ENCODE measurements at regions of chr6 and their contacts with region 1.

Region 1: DNA sequence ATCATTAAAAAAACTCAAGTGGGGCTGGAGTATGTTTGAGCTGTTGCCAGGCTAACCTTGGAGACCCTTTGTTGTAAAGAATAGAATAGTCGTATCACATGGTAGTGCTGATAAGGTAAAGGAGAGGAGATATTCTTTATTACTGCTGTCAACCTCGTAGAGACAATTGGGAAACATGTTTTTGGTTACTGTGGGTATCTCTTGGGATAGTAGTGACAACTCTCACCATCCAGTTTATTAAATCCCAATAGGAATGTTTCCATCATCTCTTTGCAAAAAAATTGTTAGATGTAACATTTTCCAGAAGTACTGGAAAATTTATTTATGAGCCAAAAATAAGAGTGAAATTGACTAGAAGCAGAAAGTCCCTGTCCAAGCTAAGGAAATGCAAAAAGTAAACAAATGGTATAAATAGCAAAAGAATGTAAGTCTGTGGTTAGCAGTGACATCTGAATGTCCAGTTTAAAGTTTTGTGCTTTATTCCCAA is 829.3 kb upstream of the CITED2 start:
- DNase-seq: peak; percentile 84
- H3K4me3 ChIP-seq: no peak overlapping the region
- H3K27ac ChIP-seq: peak overlapping the region; percentile 22
- H3K4me1 ChIP-seq: peaks cover 20% of the 10 kb centered on the region
- H3K27me3 ChIP-seq: no peaks in the 10 kb centered on the region
- CTCF ChIP-seq: no peak
- POLR2A ChIP-seq: no peak

Region 2: GRCh38 chr6:139539852-139540251 is 663.9 kb before region 1 on chr6:
- CTCF ChIA-PET with region 1: no interaction called
- POLR2A ChIA-PET with region 1: no interaction called
- dilution Hi-C with region 1: no loop called
- intact Hi-C with region 1: loop called (anchors 10 kb)
- DNase-seq: peak; percentile 13
- H3K4me3 ChIP-seq: no peak overlapping the region
- H3K27ac ChIP-seq: peak overlapping the region; percentile 24
- H3K4me1 ChIP-seq: peaks cover 29% of the 10 kb centered on the region
- H3K27me3 ChIP-seq: no peaks in the 10 kb centered on the region
- CTCF ChIP-seq: no peak
- POLR2A ChIP-seq: no peak

Region 3: DNA sequence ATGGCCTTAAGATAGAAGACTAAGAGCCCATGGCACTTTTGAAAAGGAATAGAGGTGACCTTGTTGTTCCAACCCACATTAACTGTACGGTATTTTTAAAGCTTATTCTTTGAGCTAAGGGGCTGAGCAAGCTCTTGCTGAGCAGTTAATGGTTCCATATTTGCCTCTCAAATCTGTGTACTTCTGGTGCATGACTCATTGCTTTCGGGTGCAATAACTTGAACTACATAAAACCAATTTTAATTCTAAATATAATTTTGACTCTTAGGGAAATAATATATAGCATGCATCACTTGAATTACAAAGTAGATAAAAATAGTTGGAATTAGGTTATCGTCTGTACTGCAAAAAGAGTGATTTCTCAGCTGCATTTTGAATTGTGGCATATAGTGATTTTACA is 481.2 kb before region 1 on chr6:
- CTCF ChIA-PET with region 1: no interaction called
- POLR2A ChIA-PET with region 1: no interaction called
- dilution Hi-C with region 1: no loop called
- intact Hi-C with region 1: no loop called
- DNase-seq: no peak
- H3K4me3 ChIP-seq: no peak overlapping the region
- H3K27ac ChIP-seq: no peak overlapping the region
- H3K4me1 ChIP-seq: no peaks in the 10 kb centered on the region
- H3K27me3 ChIP-seq: no peaks in the 10 kb centered on the region
- CTCF ChIP-seq: no peak
- POLR2A ChIP-seq: no peak

Region 4: DNA sequence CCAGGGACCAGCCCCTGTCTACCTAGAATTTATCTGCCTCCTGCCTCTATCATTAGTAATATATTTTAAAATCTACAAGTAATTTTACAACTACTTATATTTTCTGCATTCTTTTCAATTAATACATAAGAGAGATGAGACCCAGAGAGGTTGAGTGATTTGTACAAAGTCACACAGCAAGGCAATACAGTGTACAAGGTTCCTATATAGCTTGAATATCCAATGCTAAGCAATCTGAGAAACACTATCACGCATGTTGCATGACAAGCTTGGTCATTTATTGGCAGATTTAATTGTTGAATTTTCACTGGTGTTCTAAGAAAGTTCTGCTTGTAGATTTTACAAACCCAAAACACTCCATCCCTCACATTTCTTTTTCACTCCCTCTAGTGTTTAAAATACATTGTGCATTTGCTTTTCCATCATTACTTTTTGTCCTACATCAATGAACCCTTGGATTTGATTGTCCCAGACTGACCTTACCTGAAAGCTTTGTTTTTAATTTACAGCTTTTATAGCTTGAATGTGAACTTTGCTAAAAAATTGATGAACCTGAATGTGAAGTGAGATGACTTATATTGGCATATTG is 308.4 kb before region 1 on chr6:
- CTCF ChIA-PET with region 1: no interaction called
- POLR2A ChIA-PET with region 1: no interaction called
- dilution Hi-C with region 1: no loop called
- intact Hi-C with region 1: loop called (anchors 10 kb)
- DNase-seq: no peak
- H3K4me3 ChIP-seq: no peak overlapping the region
- H3K27ac ChIP-seq: no peak overlapping the region
- H3K4me1 ChIP-seq: no peaks in the 10 kb centered on the region
- H3K27me3 ChIP-seq: no peaks in the 10 kb centered on the region
- CTCF ChIP-seq: no peak
- POLR2A ChIP-seq: no peak

Region 5: GRCh38 chr6:140052756-140053729 is 150.7 kb before region 1 on chr6:
- CTCF ChIA-PET with region 1: no interaction called
- POLR2A ChIA-PET with region 1: no interaction called
- dilution Hi-C with region 1: no loop called
- intact Hi-C with region 1: loop called (anchors 5 kb)
- DNase-seq: peak; percentile 26
- H3K4me3 ChIP-seq: no peak overlapping the region
- H3K27ac ChIP-seq: no peak overlapping the region
- H3K4me1 ChIP-seq: peaks cover 7% of the 10 kb centered on the region
- H3K27me3 ChIP-seq: no peaks in the 10 kb centered on the region
- CTCF ChIP-seq: peak; percentile 16 to 31
- POLR2A ChIP-seq: no peak

Region 6: GRCh38 chr6:140138311-140139010 is 65.2 kb before region 1 on chr6:
- CTCF ChIA-PET with region 1: no interaction called
- POLR2A ChIA-PET with region 1: no interaction called
- dilution Hi-C with region 1: no loop called
- intact Hi-C with region 1: loop called (anchors 1 kb)
- DNase-seq: peak; percentile 70
- H3K4me3 ChIP-seq: no peak overlapping the region
- H3K27ac ChIP-seq: peak overlapping the region; percentile 98
- H3K4me1 ChIP-seq: peaks cover 10% of the 10 kb centered on the region
- H3K27me3 ChIP-seq: no peaks in the 10 kb centered on the region
- CTCF ChIP-seq: no peak
- POLR2A ChIP-seq: no peak

Region 7: GRCh38 chr6:140225701-140226436 is 22.2 kb after region 1 on chr6:
- CTCF ChIA-PET with region 1: no interaction called
- POLR2A ChIA-PET with region 1: no interaction called
- dilution Hi-C with region 1: no loop called
- intact Hi-C with region 1: loop called (anchors 2 kb)
- DNase-seq: peak; percentile 81
- H3K4me3 ChIP-seq: no peak overlapping the region
- H3K27ac ChIP-seq: peak overlapping the region; percentile 45
- H3K4me1 ChIP-seq: peaks cover 15% of the 10 kb centered on the region
- H3K27me3 ChIP-seq: no peaks in the 10 kb centered on the region
- CTCF ChIP-seq: no peak
- POLR2A ChIP-seq: no peak

Measured in endothelial cell of umbilical vein (primary cell).